Panc1 (cell line): ENCODE measurements at regions of chr2 and their contacts with region 1.

Region 1: DNA sequence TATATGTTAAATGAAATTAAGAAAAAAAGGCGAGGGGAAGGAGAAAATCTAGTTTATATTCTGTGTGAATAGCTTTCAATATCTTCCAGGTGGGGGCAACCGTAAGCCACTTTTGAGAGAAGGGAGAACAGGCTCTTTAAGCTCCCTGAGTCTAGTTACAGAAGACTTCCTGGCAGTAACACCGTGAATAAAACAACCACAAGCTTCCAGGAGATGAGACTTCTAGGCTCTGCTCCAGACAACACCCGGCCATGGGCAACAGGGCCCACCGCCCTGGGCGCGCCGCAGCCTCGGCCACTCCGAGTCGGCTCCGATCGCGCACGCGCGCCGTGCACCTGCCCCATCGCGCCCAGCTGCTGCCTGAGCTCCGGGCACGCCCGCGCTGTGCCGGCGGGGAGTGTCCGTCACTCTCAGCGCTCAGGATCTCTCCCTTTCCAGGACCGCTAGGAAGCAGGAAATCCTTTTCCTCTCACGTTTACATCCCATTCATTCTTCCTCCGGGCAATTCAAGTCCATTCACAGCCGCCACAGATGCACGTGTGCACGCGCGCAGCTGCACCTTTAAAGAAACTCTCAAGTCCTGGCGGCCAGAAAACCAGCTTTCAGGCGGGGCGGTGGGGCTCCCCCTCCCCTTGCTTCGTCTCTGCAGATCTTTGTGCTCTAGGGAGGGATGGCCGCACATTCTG is 19.4 kb upstream of the PAX3 start:
- DNase-seq: peak; percentile 30
- ATAC-seq: peak; percentile 91
- H3K4me3 ChIP-seq: peak overlapping the region; percentile 46 to 52
- H3K27ac ChIP-seq: no peak overlapping the region
- H3K4me1 ChIP-seq: no peaks in the 10 kb centered on the region
- H3K27me3 ChIP-seq: peaks cover 42% of the 10 kb centered on the region
- CTCF ChIP-seq: peak; percentile 70

Region 2: DNA sequence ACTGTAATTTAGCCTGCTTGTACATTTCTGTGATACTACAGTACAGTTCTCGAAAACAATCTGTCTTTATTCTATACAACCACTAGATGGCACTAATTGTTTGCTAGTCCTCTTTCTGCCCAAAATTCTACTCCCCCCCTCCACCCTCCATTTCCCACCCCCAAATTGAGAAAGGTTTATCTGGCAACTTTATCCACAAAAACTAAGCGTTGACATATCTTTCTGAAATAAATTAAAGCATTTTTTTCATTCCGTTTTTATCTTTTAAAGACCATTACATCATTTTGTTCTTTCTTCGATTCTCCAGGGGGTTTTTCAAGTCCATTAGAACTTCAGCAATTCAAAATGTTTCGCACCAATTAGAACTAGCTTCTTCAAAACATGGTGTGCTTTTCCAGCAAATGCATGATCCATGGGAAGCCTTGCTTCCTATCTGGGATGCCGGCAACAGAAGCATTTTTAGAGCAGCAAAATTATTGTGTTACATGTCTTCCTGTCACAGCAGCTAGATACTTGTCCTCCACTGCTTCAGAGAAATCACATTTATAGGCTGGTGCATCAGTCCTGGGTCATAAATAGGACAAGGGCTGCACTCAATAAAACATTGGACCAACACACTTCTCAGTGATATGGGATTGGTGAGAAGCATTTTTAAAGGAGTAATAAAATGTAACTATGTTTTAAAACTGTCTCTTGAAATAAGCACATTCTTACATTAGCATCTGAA is 260.7 kb before region 1 on chr2:
- CTCF ChIA-PET with region 1: no interaction called
- POLR2A ChIA-PET with region 1: no interaction called
- in situ Hi-C with region 1: no loop called
- intact Hi-C with region 1: loop called (anchors 5 kb)
- DNase-seq: peak; percentile 7
- ATAC-seq: no peak
- H3K4me3 ChIP-seq: no peak overlapping the region
- H3K27ac ChIP-seq: no peak overlapping the region
- H3K4me1 ChIP-seq: no peaks in the 10 kb centered on the region
- H3K27me3 ChIP-seq: peaks cover 2% of the 10 kb centered on the region
- CTCF ChIP-seq: peak; percentile 69

Region 3: DNA sequence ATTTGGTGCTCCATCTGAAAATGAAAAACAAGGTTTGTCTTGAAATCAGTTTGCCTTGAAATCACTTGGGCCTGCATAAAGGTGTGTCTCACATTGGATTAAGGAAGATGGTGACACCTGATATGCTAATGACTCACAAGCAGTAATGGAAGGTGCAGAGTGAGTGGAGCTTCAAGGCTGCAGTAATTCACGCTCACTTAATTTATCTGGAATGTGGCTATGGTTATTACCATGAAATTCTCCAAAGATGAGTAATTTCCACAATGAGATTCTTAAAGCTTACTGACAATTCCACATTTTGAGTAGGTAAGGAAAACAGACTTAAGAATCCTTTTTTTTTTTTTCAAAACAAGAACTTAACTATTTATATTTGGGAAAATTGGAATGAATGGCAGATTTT is 176.1 kb before region 1 on chr2:
- CTCF ChIA-PET with region 1: no interaction called
- POLR2A ChIA-PET with region 1: no interaction called
- in situ Hi-C with region 1: no loop called
- intact Hi-C with region 1: no loop called
- DNase-seq: no peak
- ATAC-seq: no peak
- H3K4me3 ChIP-seq: no peak overlapping the region
- H3K27ac ChIP-seq: no peak overlapping the region
- H3K4me1 ChIP-seq: no peaks in the 10 kb centered on the region
- H3K27me3 ChIP-seq: no peaks in the 10 kb centered on the region
- CTCF ChIP-seq: no peak

Region 4: DNA sequence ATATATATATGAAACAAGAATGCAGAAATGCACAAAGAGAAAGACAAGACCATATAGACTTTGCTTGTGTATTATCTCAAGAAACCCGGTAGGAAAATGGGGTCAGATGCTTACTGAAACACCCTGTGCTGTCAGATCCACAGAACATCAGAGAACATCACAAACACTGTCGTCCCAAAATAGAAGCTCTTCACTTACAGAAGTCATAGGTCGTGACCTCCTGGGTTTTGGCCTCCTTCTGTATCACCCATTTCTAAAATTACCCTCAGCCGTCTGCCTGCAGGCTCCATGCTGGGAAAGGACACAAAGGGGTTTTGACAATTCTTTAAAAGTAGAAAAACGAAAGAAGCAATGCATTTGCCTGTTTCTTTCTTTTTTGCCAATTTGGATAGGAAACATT is 157.2 kb before region 1 on chr2:
- CTCF ChIA-PET with region 1: no interaction called
- POLR2A ChIA-PET with region 1: no interaction called
- in situ Hi-C with region 1: no loop called
- intact Hi-C with region 1: no loop called
- DNase-seq: no peak
- ATAC-seq: no peak
- H3K4me3 ChIP-seq: no peak overlapping the region
- H3K27ac ChIP-seq: no peak overlapping the region
- H3K4me1 ChIP-seq: no peaks in the 10 kb centered on the region
- H3K27me3 ChIP-seq: no peaks in the 10 kb centered on the region
- CTCF ChIP-seq: no peak

Region 5: GRCh38 chr2:222613715-222614331 is 295.7 kb after region 1 on chr2:
- CTCF ChIA-PET with region 1: no interaction called
- POLR2A ChIA-PET with region 1: no interaction called
- in situ Hi-C with region 1: no loop called
- intact Hi-C with region 1: loop called (anchors 5 kb)
- DNase-seq: peak; percentile 30
- ATAC-seq: peak; percentile 91
- H3K4me3 ChIP-seq: no peak overlapping the region
- H3K27ac ChIP-seq: no peak overlapping the region
- H3K4me1 ChIP-seq: no peaks in the 10 kb centered on the region
- H3K27me3 ChIP-seq: no peaks in the 10 kb centered on the region
- CTCF ChIP-seq: peak; percentile 82